ENCODE measurements at regions of chr6 and their contacts with region 1.

Region 1: GRCh38 chr6:96897383-96898240 is at the start of gene NDUFAF4:
- DNase-seq: peak; percentile 97
- H3K4me3 Mint-ChIP-seq: peak within 1 kb of the TSS; percentile 94
- H3K27ac Mint-ChIP-seq: peak within 1 kb of the TSS; percentile 94
- H3K4me1 Mint-ChIP-seq: peaks cover 26% of the 10 kb centered on the region
- H3K27me3 Mint-ChIP-seq: peaks cover 11% of the 10 kb centered on the region
- total RNA-seq, gene NDUFAF4: 56.3 to 59.9 TPM

Region 2: DNA sequence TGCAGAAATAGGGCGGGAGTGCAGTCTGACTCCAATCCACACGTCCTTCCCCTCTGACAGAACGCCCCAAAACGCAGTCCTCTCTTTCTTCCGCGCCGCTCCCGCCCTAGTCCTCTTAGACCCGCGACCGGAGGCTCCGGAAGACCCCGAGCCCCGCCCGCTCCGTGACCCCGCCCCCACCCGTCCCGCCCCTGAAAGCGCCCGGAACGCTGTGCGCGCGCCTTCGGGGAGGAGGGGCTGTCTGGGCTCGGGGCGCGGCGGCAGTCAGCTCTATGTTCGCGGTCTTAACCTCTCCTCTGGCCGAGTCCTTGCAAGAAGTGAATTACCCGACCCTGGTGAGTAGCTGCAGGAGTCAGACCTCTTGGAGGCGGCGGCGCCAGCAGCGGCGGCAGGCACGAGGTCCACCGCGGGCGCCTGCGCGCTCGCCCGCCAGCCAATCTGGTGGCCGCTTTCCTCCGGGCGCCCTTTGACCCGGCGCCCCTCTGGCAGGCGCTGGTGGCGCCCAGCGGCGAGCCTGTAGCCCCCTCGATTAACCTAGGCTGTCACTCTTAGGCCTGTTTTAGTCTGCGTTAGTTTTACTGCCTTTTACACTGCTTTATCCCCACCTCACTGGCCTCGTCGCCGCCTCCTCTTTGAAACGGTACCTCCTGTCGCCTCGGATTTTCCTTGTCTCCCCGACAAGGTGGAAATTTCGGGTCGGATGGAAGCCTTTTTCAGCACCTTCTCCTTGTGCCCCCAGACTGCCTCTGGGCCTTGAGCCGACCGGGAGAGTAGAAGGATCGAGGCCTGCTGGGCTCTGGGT is 1320.1 kb before region 1 on chr6 and contains the start of gene MANEA:
- CTCF ChIA-PET with region 1: no interaction called
- POLR2A ChIA-PET with region 1: no interaction called
- intact Hi-C with region 1: loop called (anchors 5 kb)
- DNase-seq: peak; percentile 85
- H3K4me3 Mint-ChIP-seq: peak within 1 kb of the TSS; percentile 90
- H3K27ac Mint-ChIP-seq: peak within 1 kb of the TSS; percentile 96
- H3K4me1 Mint-ChIP-seq: peaks cover 38% of the 10 kb centered on the region
- H3K27me3 Mint-ChIP-seq: no peaks in the 10 kb centered on the region
- total RNA-seq, gene MANEA: 16.3 to 18.7 TPM

Region 3: GRCh38 chr6:96542702-96543101 is 354.9 kb before region 1 on chr6:
- CTCF ChIA-PET with region 1: no interaction called
- POLR2A ChIA-PET with region 1: no interaction called
- intact Hi-C with region 1: loop called (anchors 5 kb)
- DNase-seq: no peak
- H3K4me3 Mint-ChIP-seq: no peak overlapping the region
- H3K27ac Mint-ChIP-seq: no peak overlapping the region
- H3K4me1 Mint-ChIP-seq: no peaks in the 10 kb centered on the region
- H3K27me3 Mint-ChIP-seq: no peaks in the 10 kb centered on the region

Region 4: GRCh38 chr6:96837081-96837971 is 60.3 kb before region 1 on chr6 and contains the start of gene GPR63:
- CTCF ChIA-PET with region 1: interaction called, 4 read pairs
- POLR2A ChIA-PET with region 1: no interaction called
- intact Hi-C with region 1: loop called (anchors 1 kb)
- DNase-seq: peak; percentile 87
- H3K4me3 Mint-ChIP-seq: peak within 1 kb of the TSS; percentile 95
- H3K27ac Mint-ChIP-seq: peak within 1 kb of the TSS; percentile 50
- H3K4me1 Mint-ChIP-seq: peaks cover 17% of the 10 kb centered on the region
- H3K27me3 Mint-ChIP-seq: peaks cover 16% of the 10 kb centered on the region
- total RNA-seq, gene GPR63: 1.5 to 1.7 TPM

Region 5: DNA sequence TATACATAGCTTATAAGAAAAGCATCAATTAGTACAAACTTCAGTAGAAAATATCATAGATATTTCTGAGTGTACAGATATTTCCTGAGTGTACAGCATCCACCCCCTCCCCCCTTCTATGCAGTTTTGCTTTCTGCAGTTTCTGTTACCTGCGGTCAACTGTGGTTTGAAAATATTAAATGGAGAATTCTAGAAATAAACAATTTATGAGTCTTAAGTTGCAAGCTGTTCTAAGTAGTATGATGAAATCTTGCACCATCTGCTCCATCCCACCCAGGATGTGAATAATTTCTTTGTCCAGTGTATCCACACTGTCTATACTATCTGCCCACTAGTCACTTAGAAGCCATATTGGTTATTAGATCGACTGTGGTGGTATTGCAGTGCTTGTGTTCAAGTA is 44.5 kb before region 1 on chr6:
- CTCF ChIA-PET with region 1: no interaction called
- POLR2A ChIA-PET with region 1: no interaction called
- intact Hi-C with region 1: no loop called
- DNase-seq: no peak
- H3K4me3 Mint-ChIP-seq: no peak overlapping the region
- H3K27ac Mint-ChIP-seq: no peak overlapping the region
- H3K4me1 Mint-ChIP-seq: no peaks in the 10 kb centered on the region
- H3K27me3 Mint-ChIP-seq: peaks cover 2% of the 10 kb centered on the region

Region 6: GRCh38 chr6:96939007-96939805 is 41.6 kb after region 1 on chr6:
- CTCF ChIA-PET with region 1: no interaction called
- POLR2A ChIA-PET with region 1: no interaction called
- intact Hi-C with region 1: loop called (anchors 1 kb)
- DNase-seq: peak; percentile 47
- H3K4me3 Mint-ChIP-seq: no peak overlapping the region
- H3K27ac Mint-ChIP-seq: no peak overlapping the region
- H3K4me1 Mint-ChIP-seq: peaks cover 9% of the 10 kb centered on the region
- H3K27me3 Mint-ChIP-seq: no peaks in the 10 kb centered on the region

Region 7: DNA sequence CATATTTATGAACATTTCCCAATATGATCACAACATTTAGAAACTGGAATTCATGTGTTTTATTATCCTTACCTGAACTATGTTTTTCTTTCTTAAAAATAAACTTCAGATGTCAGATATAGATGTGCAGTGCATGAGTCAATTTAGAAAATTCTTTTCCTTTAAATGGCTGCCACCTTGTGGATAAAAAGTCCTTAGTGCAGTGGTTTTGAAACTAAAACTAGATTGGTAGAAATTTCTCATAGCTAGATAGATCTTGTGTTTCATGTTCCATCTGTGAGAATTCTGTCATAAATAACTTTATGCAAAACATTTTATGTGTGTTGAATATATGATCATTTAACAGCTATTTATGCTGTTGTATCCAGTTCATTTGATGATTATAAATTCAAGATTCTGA is 161.9 kb after region 1 on chr6:
- CTCF ChIA-PET with region 1: interaction called, 11 read pairs
- POLR2A ChIA-PET with region 1: no interaction called
- intact Hi-C with region 1: loop called (anchors 1 kb)
- DNase-seq: no peak
- H3K4me3 Mint-ChIP-seq: no peak overlapping the region
- H3K27ac Mint-ChIP-seq: no peak overlapping the region
- H3K4me1 Mint-ChIP-seq: no peaks in the 10 kb centered on the region
- H3K27me3 Mint-ChIP-seq: no peaks in the 10 kb centered on the region

Measured in activated CD4-positive, alpha-beta memory T cell treated with anti-CD3 and anti-CD28 coated beads for 36 hours (primary cell).